ENCODE measurements at regions of chr3 and their contacts with region 1.

Region 1: DNA sequence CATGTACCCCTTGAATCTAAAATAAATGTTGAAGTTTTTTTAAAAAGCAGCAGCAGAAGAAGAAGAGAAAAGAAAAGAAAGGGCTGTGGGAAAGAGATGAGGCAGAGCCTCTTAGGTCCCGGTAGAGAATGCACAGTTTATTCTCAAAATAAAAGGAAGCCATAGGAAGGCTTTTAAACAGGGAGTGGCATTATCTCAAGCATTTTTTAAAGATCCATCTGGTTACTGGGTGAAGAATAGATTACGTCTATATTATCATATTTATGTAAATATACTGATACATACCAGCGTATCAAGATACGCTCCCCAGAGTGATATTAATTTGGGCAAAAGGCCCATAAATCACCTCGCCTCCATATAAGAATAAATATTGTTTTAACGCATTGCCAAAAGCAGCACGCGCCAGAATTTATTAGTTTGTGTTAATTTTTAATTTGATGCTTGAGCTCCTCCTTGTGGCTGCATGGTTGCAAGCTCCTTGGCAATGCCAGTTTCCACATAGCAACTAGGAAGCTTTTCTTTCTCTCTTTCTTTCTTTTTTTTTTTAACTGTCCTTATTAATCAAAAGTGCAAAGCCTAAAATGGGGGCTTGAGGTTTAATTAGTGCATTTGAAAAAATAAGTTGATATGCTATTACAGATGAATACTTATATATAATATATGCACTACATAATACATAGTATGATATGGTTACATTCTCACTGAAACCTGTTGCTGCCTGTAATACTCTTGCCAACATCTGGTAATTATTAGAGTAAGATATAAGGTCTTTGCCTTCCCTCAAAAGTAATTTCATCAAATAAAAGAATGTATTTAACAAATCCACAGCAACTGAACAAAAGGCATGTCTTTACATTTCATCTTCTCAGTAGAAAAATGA is 242.8 kb upstream of the UBE2E2 start:
- DNase-seq: peak; percentile 26
- ATAC-seq: 0 out of 2 replicates have a peak, but pooled peaks have one; percentile 40
- H3K4me3 ChIP-seq: no peak overlapping the region
- H3K27ac ChIP-seq: no peak overlapping the region
- H3K4me1 ChIP-seq: no peaks in the 10 kb centered on the region
- H3K27me3 ChIP-seq: no peaks in the 10 kb centered on the region
- CTCF ChIP-seq: peak; percentile 69
- POLR2A ChIP-seq: no peak
- RAD21 ChIP-seq: peak; percentile 62

Region 2: DNA sequence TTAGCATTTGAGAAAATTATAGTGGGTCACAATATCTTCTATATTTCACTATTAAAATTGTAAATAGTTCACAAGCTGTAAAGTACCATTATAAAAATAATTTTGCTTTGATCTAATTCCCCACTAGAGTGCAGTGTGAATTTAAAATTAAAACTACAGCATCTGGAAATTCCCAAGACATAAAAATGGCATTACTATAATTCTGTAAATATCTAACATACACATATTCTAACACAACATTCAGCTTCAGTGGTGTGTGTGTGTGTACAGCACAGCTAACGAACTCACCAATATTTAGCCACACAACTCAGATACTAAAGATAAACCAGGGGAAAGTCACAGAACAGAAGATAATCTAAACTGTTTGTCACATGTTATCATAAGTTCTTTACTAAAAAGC is 784.4 kb before region 1 on chr3:
- CTCF ChIA-PET with region 1: no interaction called
- POLR2A ChIA-PET with region 1: no interaction called
- dilution Hi-C with region 1: no loop called
- in situ Hi-C with region 1: no loop called
- intact Hi-C with region 1: loop called (anchors 10 kb)
- DNase-seq: no peak
- ATAC-seq: no peak
- H3K4me3 ChIP-seq: no peak overlapping the region
- H3K27ac ChIP-seq: no peak overlapping the region
- H3K4me1 ChIP-seq: no peaks in the 10 kb centered on the region
- H3K27me3 ChIP-seq: no peaks in the 10 kb centered on the region
- CTCF ChIP-seq: no peak
- POLR2A ChIP-seq: no peak
- RAD21 ChIP-seq: no peak

Region 3: DNA sequence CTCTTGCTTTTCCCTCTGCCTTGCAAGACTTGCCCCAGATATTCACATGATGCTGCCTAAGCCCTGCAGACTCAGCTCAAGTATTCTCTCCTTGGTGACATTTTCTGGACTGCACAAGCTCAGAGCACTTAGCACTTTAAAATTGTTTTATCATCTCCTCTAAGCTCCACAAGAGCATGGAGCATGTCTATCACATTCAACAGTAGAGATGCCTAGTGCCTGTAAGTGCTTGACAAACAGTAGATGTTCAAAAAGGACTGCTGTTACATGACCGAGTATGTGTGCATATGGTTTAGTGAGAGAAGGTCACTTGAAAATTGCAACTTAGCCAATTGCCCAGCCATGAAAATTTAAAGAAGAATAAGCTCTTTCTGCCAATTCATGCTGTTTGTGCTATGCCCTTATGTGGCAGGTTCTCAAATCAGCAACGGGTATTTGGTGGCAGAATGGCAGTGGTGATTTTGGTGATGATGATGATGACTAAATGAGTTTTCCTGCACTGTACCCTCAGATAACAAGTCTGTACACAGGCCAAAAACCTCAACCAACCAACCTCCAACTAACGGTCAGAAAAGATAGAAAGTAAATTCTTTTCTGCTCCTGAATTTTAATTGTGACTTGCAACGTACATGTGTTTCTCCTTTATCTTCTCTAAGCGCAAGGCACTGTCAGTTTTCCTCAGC is 404.5 kb before region 1 on chr3:
- CTCF ChIA-PET with region 1: no interaction called
- POLR2A ChIA-PET with region 1: no interaction called
- dilution Hi-C with region 1: no loop called
- in situ Hi-C with region 1: loop called (anchors 25 kb)
- intact Hi-C with region 1: no loop called
- DNase-seq: no peak
- ATAC-seq: no peak
- H3K4me3 ChIP-seq: no peak overlapping the region
- H3K27ac ChIP-seq: no peak overlapping the region
- H3K4me1 ChIP-seq: no peaks in the 10 kb centered on the region
- H3K27me3 ChIP-seq: no peaks in the 10 kb centered on the region
- CTCF ChIP-seq: no peak
- POLR2A ChIP-seq: no peak
- RAD21 ChIP-seq: no peak

Region 4: GRCh38 chr3:22922317-22922716 is 38.0 kb before region 1 on chr3:
- CTCF ChIA-PET with region 1: no interaction called
- POLR2A ChIA-PET with region 1: no interaction called
- dilution Hi-C with region 1: no loop called
- in situ Hi-C with region 1: no loop called
- intact Hi-C with region 1: loop called (anchors 1 kb)
- DNase-seq: peak; percentile 9
- ATAC-seq: no peak
- H3K4me3 ChIP-seq: no peak overlapping the region
- H3K27ac ChIP-seq: no peak overlapping the region
- H3K4me1 ChIP-seq: no peaks in the 10 kb centered on the region
- H3K27me3 ChIP-seq: no peaks in the 10 kb centered on the region
- CTCF ChIP-seq: 0 out of 2 replicates have a peak, but pooled peaks have one; percentile 11
- POLR2A ChIP-seq: no peak
- RAD21 ChIP-seq: no peak

Region 5: DNA sequence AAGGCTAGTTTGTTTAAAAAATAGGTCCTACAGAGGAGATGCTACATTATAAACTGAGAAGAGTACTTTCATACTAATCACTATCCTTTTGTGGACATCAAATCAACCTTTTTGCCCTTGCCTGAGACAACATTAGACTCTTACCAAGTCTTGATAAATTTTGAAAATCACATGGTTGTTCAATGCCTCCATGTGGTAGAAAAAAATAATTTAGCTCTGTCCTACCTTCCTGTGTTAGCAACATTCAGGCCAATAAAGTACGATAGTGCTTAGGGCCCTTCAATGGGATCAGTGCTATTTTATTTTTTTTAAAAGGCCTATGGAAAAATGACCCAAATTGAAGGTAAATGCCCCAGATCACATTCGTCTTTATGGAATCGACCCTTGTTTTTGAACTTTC is 840.4 kb after region 1 on chr3:
- CTCF ChIA-PET with region 1: no interaction called
- POLR2A ChIA-PET with region 1: no interaction called
- dilution Hi-C with region 1: no loop called
- in situ Hi-C with region 1: no loop called
- intact Hi-C with region 1: loop called (anchors 2 kb)
- DNase-seq: peak; percentile 39
- ATAC-seq: peak; percentile 74
- H3K4me3 ChIP-seq: no peak overlapping the region
- H3K27ac ChIP-seq: no peak overlapping the region
- H3K4me1 ChIP-seq: no peaks in the 10 kb centered on the region
- H3K27me3 ChIP-seq: peaks cover 4% of the 10 kb centered on the region
- CTCF ChIP-seq: peak; percentile 42
- POLR2A ChIP-seq: no peak
- RAD21 ChIP-seq: peak; percentile 50

Measured in IMR-90 (cell line).